CD4-positive, alpha-beta memory T cell (primary cell): ENCODE measurements at regions of chr16 and their contacts with region 1.

Region 1: GRCh38 chr16:67159593-67160406 is at the starts of genes FBXL8 and TRADD:
- DNase-seq: peak; percentile 82 to 88 (median 85)
- H3K4me3 ChIP-seq: peak within 1 kb of the TSS; percentile 95
- H3K4me3 Mint-ChIP-seq: peak within 1 kb of the TSS; percentile 92 to 96 (median 94)
- H3K27ac ChIP-seq: peak within 1 kb of the TSS; percentile 97
- H3K27ac Mint-ChIP-seq: peak within 1 kb of the TSS; percentile 94 to 100 (median 99)
- H3K4me1 ChIP-seq: peaks cover 79% of the 10 kb centered on the region
- H3K4me1 Mint-ChIP-seq: peaks cover 34 to 69% (median 50%) of the 10 kb centered on the region in 4 donors
- H3K27me3 ChIP-seq: peaks cover 7% of the 10 kb centered on the region
- H3K27me3 Mint-ChIP-seq: peaks cover 3% of the 10 kb centered on the region in 2 donors
- total RNA-seq, gene FBXL8: 69.9 to 76.2 TPM
- total RNA-seq, gene TRADD: 161 to 173 TPM

Region 2: DNA sequence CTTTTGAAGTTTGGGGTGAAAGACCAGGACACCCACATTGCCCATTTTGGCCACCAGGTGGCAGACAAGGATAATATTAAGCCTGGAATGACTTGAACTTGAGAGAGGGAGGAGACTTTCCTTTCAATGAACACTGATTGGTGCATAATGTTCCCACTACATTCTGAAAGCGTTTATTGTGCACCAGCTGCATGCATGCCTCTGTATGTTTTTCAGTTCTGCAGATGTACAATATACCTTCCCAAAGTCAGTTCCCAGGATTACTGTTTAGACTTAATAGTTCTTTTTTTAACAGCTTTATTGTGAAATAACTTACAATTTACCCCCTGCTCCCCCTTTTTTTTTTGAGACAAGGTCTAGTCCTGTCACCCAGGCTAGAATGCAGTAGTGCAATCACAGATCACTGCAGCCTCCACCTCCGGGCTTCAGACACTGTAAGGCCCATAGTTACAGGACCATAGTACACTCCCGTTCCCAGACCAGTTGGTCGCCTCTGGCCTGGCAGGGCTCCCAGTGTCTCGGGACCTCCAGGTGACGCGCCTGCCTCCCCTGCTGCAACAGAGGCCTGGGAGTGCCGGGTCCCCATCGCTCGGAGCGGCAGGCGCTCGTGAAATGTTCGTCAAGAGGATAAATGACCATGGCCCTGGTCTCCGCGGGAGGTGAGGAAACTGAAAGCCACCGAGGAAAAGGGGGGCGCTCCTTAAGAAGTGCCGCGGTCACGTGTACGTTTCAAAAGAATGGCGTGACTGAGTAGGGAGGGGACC is 212.3 kb before region 1 on chr16:
- CTCF ChIA-PET with region 1: interaction called, 4 read pairs
- POLR2A ChIA-PET with region 1: interaction called, 3 read pairs
- intact Hi-C with region 1: loop called (anchors 2 kb)
- DNase-seq: peak; percentile 77 to 83 (median 81)
- H3K4me3 ChIP-seq: peak overlapping the region in 1 of 2 donors; percentile 60
- H3K4me3 Mint-ChIP-seq: peak overlapping the region; percentile 86 to 96 (median 90)
- H3K27ac ChIP-seq: no peak overlapping the region
- H3K27ac Mint-ChIP-seq: peak overlapping the region in 6 of 7 donors; percentile 10 to 79 (median 39)
- H3K4me1 ChIP-seq: peaks cover 11% of the 10 kb centered on the region
- H3K4me1 Mint-ChIP-seq: peaks cover 9 to 24% (median 13%) of the 10 kb centered on the region in 4 donors
- H3K27me3 ChIP-seq: peaks cover 16% of the 10 kb centered on the region
- H3K27me3 Mint-ChIP-seq: peaks cover 26 to 27% of the 10 kb centered on the region in 2 donors

Region 3: DNA sequence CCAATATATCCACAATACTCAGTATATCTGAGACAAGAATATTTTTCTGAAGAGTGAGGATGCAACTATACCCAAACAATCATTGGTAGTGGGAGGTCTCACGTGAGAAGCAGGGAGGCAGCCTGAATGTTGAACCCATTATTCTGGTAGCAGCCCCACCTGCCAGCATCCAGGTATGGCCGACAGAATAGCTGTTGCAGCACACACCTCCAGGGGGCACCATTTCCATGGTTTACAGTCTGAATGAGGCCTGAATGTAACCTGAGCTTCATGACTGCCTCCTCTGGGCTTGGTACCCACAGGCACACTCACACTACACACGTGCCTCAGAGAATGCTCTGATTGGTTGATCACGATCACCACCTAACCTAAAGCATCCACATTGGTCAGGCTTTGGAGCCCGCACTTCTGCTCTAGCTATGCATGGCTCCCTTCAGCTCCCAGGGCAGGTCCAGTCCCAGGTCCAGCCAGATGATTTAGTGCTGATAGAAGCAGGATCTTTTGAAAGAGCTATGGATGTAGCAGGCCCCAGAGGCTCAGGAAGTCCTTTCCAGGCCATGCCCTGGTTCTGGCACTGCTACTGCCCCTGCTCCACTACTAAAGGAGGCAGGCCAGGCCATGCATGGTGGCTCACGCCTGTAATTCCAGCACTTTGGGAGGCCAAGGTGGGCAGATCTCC is 141.9 kb before region 1 on chr16:
- CTCF ChIA-PET with region 1: interaction called, 187 read pairs
- POLR2A ChIA-PET with region 1: interaction called, 55 read pairs
- intact Hi-C with region 1: loop called (anchors 1 kb)
- DNase-seq: peak; percentile 82 to 88 (median 86)
- H3K4me3 ChIP-seq: no peak overlapping the region
- H3K4me3 Mint-ChIP-seq: peak overlapping the region in 2 of 8 donors; percentile 3 to 21
- H3K27ac ChIP-seq: no peak overlapping the region
- H3K27ac Mint-ChIP-seq: peak overlapping the region in 4 of 7 donors; percentile 24 to 77 (median 56)
- H3K4me1 ChIP-seq: peaks cover 13% of the 10 kb centered on the region
- H3K4me1 Mint-ChIP-seq: peaks cover 2 to 19% (median 8%) of the 10 kb centered on the region in 4 donors
- H3K27me3 ChIP-seq: no peaks in the 10 kb centered on the region
- H3K27me3 Mint-ChIP-seq: no peaks in the 10 kb centered on the region

Region 4: DNA sequence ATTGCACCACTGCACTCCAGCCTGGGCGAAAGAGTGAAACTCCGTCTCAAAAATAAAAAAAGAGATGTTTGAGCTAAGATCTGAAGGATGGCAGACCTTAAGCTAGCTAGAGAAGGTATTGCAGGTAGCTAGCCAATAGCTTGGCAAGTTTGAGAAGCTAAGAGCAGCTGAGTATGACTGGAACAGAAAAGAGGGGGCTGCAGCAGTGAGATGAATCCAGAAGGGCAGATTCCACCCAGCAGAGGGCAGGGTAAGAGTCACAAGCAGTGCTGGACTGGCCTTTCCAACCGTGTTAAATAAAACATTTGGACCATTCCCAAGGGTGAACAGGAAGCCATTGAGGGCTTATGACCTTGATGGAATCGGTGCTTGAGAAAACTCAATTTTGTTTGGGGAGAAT is 55.7 kb before region 1 on chr16:
- CTCF ChIA-PET with region 1: interaction called, 41 read pairs
- POLR2A ChIA-PET with region 1: interaction called, 14 read pairs
- intact Hi-C with region 1: loop called (anchors 2 kb)
- DNase-seq: no peak
- H3K4me3 ChIP-seq: no peak overlapping the region
- H3K4me3 Mint-ChIP-seq: no peak overlapping the region
- H3K27ac ChIP-seq: no peak overlapping the region
- H3K27ac Mint-ChIP-seq: peak overlapping the region in 3 of 7 donors; percentile 7 to 47 (median 19)
- H3K4me1 ChIP-seq: peaks cover 3% of the 10 kb centered on the region
- H3K4me1 Mint-ChIP-seq: peaks cover 0 to 6% (median 0%) of the 10 kb centered on the region in 4 donors
- H3K27me3 ChIP-seq: no peaks in the 10 kb centered on the region
- H3K27me3 Mint-ChIP-seq: no peaks in the 10 kb centered on the region

Region 5: DNA sequence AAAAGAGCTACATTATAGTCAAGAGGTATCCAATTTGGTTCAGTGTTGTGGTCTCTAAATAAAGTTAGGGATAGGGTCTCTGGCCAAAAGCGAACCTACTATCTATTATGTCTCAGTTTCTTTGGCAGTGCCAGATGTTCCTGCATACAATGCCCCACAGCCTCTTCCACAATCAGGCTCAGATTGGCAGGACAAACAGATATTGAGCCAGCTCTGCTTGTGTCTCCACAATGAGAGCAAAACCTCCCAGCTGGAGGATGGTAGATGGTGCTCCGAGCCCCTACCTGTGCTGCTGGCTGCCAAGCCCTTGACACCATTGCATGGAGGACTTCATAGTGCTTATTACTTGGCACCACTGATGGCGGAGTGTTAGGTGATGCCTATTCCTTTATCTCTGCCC is 30.4 kb before region 1 on chr16:
- CTCF ChIA-PET with region 1: interaction called, 10 read pairs
- POLR2A ChIA-PET with region 1: interaction called, 3 read pairs
- intact Hi-C with region 1: no loop called
- DNase-seq: no peak
- H3K4me3 ChIP-seq: no peak overlapping the region
- H3K4me3 Mint-ChIP-seq: no peak overlapping the region
- H3K27ac ChIP-seq: no peak overlapping the region
- H3K27ac Mint-ChIP-seq: peak overlapping the region in 2 of 7 donors; percentile 23 to 52
- H3K4me1 ChIP-seq: no peaks in the 10 kb centered on the region
- H3K4me1 Mint-ChIP-seq: no peaks in the 10 kb centered on the region
- H3K27me3 ChIP-seq: no peaks in the 10 kb centered on the region
- H3K27me3 Mint-ChIP-seq: no peaks in the 10 kb centered on the region

Region 6: GRCh38 chr16:67183627-67184328 is 24.0 kb after region 1 on chr16 and contains the start of gene MATCAP1:
- CTCF ChIA-PET with region 1: interaction called, 58 read pairs
- POLR2A ChIA-PET with region 1: interaction called, 320 read pairs
- intact Hi-C with region 1: loop called (anchors 1 kb)
- DNase-seq: peak; percentile 95 to 98 (median 97)
- H3K4me3 ChIP-seq: peak within 1 kb of the TSS; percentile 65 to 85
- H3K4me3 Mint-ChIP-seq: peak within 1 kb of the TSS; percentile 54 to 96 (median 68)
- H3K27ac ChIP-seq: peak within 1 kb of the TSS; percentile 91
- H3K27ac Mint-ChIP-seq: peak within 1 kb of the TSS in 6 of 7 donors; percentile 15 to 98 (median 66)
- H3K4me1 ChIP-seq: peaks cover 25% of the 10 kb centered on the region
- H3K4me1 Mint-ChIP-seq: peaks cover 8 to 17% (median 11%) of the 10 kb centered on the region in 4 donors
- H3K27me3 ChIP-seq: no peaks in the 10 kb centered on the region
- H3K27me3 Mint-ChIP-seq: peaks cover 0 to 2% of the 10 kb centered on the region in 2 donors
- total RNA-seq, gene MATCAP1: 8.6 to 9.0 TPM

Region 7: GRCh38 chr16:67226804-67227557 is 67.2 kb after region 1 on chr16 and contains the start of gene TMEM208:
- CTCF ChIA-PET with region 1: interaction called, 3 read pairs
- POLR2A ChIA-PET with region 1: interaction called, 27 read pairs
- intact Hi-C with region 1: loop called (anchors 2 kb)
- DNase-seq: peak; percentile 95 to 99 (median 97)
- H3K4me3 ChIP-seq: peak within 1 kb of the TSS; percentile 73 to 99
- H3K4me3 Mint-ChIP-seq: peak within 1 kb of the TSS; percentile 98 to 100 (median 100)
- H3K27ac ChIP-seq: peak within 1 kb of the TSS; percentile 88
- H3K27ac Mint-ChIP-seq: peak within 1 kb of the TSS; percentile 96 to 100 (median 99)
- H3K4me1 ChIP-seq: peaks cover 51% of the 10 kb centered on the region
- H3K4me1 Mint-ChIP-seq: peaks cover 43 to 58% (median 54%) of the 10 kb centered on the region in 4 donors
- H3K27me3 ChIP-seq: no peaks in the 10 kb centered on the region
- H3K27me3 Mint-ChIP-seq: no peaks in the 10 kb centered on the region
- total RNA-seq, gene TMEM208: 35.5 to 35.7 TPM